Mammary epithelial cell (primary cell): ENCODE measurements at regions of chr6 and their contacts with region 1.

Region 1: GRCh38 chr6:165791876-165792437 is 128.9 kb upstream of the PDE10A start:
- DNase-seq: no peak
- H3K4me3 ChIP-seq: no peak overlapping the region
- H3K27ac ChIP-seq: no peak overlapping the region
- H3K4me1 ChIP-seq: no peaks in the 10 kb centered on the region
- H3K27me3 ChIP-seq: no peaks in the 10 kb centered on the region
- CTCF ChIP-seq: no peak

Region 2: DNA sequence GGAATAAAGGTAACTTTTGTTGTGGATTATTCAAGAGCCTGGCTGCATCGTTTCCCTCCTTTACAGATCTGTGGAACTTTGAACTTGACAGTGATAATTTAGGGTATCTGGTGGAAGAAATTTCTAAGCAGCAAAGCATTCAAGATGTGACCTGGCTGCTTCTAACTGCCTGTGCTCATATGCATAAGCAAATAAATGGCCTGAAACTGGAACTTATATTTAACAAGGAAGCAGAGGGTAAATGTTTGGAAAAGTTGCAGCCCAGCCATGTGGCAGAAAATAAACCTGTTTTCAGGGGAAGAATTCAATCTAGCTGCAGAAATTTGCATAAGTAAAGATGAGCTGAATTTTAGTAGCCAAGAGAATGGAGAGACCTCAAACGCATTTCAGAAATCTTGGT is 656.1 kb before region 1 on chr6:
- CTCF ChIA-PET with region 1: no interaction called
- dilution Hi-C with region 1: no loop called
- in situ Hi-C with region 1: no loop called
- intact Hi-C with region 1: no loop called
- DNase-seq: no peak
- H3K4me3 ChIP-seq: no peak overlapping the region
- H3K27ac ChIP-seq: no peak overlapping the region
- H3K4me1 ChIP-seq: no peaks in the 10 kb centered on the region
- H3K27me3 ChIP-seq: no peaks in the 10 kb centered on the region
- CTCF ChIP-seq: no peak

Region 3: GRCh38 chr6:165762876-165763275 is 29.1 kb before region 1 on chr6:
- CTCF ChIA-PET with region 1: no interaction called
- dilution Hi-C with region 1: no loop called
- in situ Hi-C with region 1: no loop called
- intact Hi-C with region 1: no loop called
- DNase-seq: no peak
- H3K4me3 ChIP-seq: no peak overlapping the region
- H3K27ac ChIP-seq: no peak overlapping the region
- H3K4me1 ChIP-seq: no peaks in the 10 kb centered on the region
- H3K27me3 ChIP-seq: no peaks in the 10 kb centered on the region
- CTCF ChIP-seq: no peak

Region 4: GRCh38 chr6:165950316-165950715 is 158.4 kb after region 1 on chr6:
- CTCF ChIA-PET with region 1: interaction called, 13 read pairs
- dilution Hi-C with region 1: no loop called
- in situ Hi-C with region 1: no loop called
- intact Hi-C with region 1: no loop called
- DNase-seq: no peak
- H3K4me3 ChIP-seq: no peak overlapping the region
- H3K27ac ChIP-seq: no peak overlapping the region
- H3K4me1 ChIP-seq: no peaks in the 10 kb centered on the region
- H3K27me3 ChIP-seq: no peaks in the 10 kb centered on the region
- CTCF ChIP-seq: no peak